HepG2 (cell line): ENCODE measurements at regions of chr2 and their contacts with region 1.

Region 1: GRCh38 chr2:41698678-41699422 is 349.0 kb upstream of the PKDCC start:
- DNase-seq: no peak
- ATAC-seq: peak; percentile 93
- H3K4me3 ChIP-seq: no peak overlapping the region
- H3K27ac ChIP-seq: no peak overlapping the region
- H3K4me1 ChIP-seq: no peaks in the 10 kb centered on the region
- H3K27me3 ChIP-seq: no peaks in the 10 kb centered on the region; a peak in 1 of 5 replicates
- CTCF ChIP-seq: peak; percentile 92
- EP300 ChIP-seq: no peak
- POLR2A ChIP-seq: no peak
- RAD21 ChIP-seq: peak; percentile 62

Region 2: DNA sequence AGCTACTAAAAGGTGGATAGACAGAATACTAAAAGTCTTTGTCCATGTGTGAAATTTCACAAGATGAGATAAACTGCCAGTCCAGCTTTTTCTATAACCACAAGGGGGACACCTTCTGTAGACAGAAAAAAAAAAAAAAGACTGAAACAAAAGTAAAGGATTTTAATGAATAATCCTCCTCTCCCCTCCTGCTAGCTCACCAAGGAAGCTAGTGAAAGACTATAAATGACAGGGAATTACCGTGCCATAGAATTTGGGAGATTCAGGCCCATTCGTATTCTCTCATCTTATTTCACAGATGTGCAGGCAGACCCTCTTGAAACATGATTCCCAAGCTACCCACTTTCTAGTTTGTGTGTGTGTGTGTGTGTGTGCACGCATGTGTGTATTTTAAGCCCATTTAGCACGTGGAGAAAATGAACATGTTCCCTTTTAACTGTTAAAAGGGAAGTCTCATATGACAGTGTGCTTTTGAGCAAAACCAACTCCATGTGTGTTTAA is 1210.7 kb before region 1 on chr2:
- CTCF ChIA-PET with region 1: no interaction called
- POLR2A ChIA-PET with region 1: no interaction called
- in situ Hi-C with region 1: no loop called
- intact Hi-C with region 1: loop called (anchors 2 kb)
- DNase-seq: peak; percentile 33
- ATAC-seq: peak; percentile 66
- H3K4me3 ChIP-seq: no peak overlapping the region
- H3K27ac ChIP-seq: no peak overlapping the region
- H3K4me1 ChIP-seq: peaks cover 9% of the 10 kb centered on the region; the same call in 1 of the 2 replicates
- H3K27me3 ChIP-seq: no peaks in the 10 kb centered on the region
- CTCF ChIP-seq: peak; percentile 25; the same call in 1 of the 2 replicates
- EP300 ChIP-seq: no peak
- POLR2A ChIP-seq: no peak
- RAD21 ChIP-seq: no peak

Region 3: DNA sequence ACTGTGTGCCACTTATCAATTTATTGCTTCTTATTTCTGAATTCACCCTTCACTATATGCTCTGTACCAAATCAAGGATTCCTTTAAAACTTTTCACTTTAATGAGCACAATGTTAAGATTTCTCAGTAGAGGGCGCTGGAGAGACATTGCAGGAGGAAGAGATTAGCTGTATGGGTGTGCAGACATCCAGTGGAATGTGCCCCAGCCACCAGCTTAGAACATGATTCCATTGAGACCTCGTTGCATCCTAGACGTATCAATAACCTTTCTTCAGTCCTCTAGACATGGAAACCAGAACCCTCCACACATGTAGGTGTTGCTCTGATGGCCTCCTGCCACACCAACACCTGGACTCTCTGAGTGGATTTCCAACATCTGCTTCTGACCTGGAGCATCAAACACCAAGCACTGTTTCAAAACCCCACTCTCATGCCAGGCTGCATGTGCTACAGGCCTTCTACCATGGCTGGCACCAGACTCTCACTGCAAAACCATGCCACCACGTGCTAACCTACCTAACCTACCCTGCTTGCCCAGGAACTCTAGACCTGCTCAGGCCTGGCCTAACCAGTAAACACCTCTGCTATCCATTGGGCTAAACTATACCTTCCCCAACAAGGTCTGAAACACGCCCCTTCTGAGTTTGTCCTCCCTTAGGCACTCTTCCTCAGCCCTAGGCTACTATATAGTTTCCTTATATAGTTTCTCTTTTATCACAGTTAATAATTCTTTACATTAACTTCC is 284.2 kb before region 1 on chr2:
- CTCF ChIA-PET with region 1: interaction called, 12 read pairs
- POLR2A ChIA-PET with region 1: no interaction called
- in situ Hi-C with region 1: no loop called
- intact Hi-C with region 1: loop called (anchors 1 kb)
- DNase-seq: peak; percentile 56
- ATAC-seq: peak; percentile 98
- H3K4me3 ChIP-seq: no peak overlapping the region
- H3K27ac ChIP-seq: no peak overlapping the region
- H3K4me1 ChIP-seq: no peaks in the 10 kb centered on the region
- H3K27me3 ChIP-seq: no peaks in the 10 kb centered on the region
- CTCF ChIP-seq: peak; percentile 78
- EP300 ChIP-seq: no peak
- POLR2A ChIP-seq: no peak
- RAD21 ChIP-seq: peak; percentile 50; the same call in 1 of the 2 replicates

Region 4: GRCh38 chr2:41420219-41420618 is 278.6 kb before region 1 on chr2:
- CTCF ChIA-PET with region 1: no interaction called
- POLR2A ChIA-PET with region 1: no interaction called
- in situ Hi-C with region 1: loop called (anchors 10 kb)
- intact Hi-C with region 1: no loop called
- DNase-seq: no peak
- ATAC-seq: no peak
- H3K4me3 ChIP-seq: no peak overlapping the region
- H3K27ac ChIP-seq: no peak overlapping the region
- H3K4me1 ChIP-seq: no peaks in the 10 kb centered on the region
- H3K27me3 ChIP-seq: no peaks in the 10 kb centered on the region
- CTCF ChIP-seq: no peak
- EP300 ChIP-seq: no peak
- POLR2A ChIP-seq: no peak
- RAD21 ChIP-seq: no peak

Region 5: DNA sequence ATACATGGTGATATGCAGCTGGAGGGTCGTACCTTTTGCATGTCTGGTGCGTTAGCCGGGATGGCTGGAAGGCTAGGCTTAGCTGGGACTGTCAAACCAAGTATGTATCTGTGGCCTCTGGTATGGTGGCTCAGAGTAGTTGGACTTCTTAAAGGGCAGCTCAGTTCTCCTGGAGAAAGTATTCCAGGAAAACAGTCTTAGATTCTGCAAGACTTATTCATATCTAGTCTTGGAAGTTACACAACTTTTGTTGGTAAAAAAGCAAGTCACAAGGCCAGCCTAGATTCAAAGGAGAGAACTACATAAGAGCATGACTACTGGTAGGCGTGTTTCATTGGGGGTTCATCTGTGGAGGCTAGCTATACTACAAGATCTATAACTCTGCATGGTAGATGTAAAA is 515.8 kb after region 1 on chr2:
- CTCF ChIA-PET with region 1: no interaction called
- POLR2A ChIA-PET with region 1: no interaction called
- in situ Hi-C with region 1: no loop called
- intact Hi-C with region 1: no loop called
- DNase-seq: no peak
- ATAC-seq: peak; percentile 26
- H3K4me3 ChIP-seq: no peak overlapping the region
- H3K27ac ChIP-seq: no peak overlapping the region
- H3K4me1 ChIP-seq: peaks cover 99% of the 10 kb centered on the region
- H3K27me3 ChIP-seq: no peaks in the 10 kb centered on the region
- CTCF ChIP-seq: no peak
- EP300 ChIP-seq: no peak
- POLR2A ChIP-seq: 0 out of 4 replicates have a peak, but pooled peaks of 1 of the 2 experiments have one; percentile 11
- RAD21 ChIP-seq: no peak